Naive thymus-derived CD4-positive, alpha-beta T cell (primary cell): ENCODE measurements at regions of chr14 and their contacts with region 1.

Region 1: GRCh38 chr14:22491683-22492621 is 97.1 kb downstream of the DAD1 start:
- DNase-seq: peak in 1 of 9 donors; percentile 68
- ATAC-seq: peak; percentile 79
- H3K4me3 ChIP-seq: peak overlapping the region; percentile 67
- H3K4me3 Mint-ChIP-seq: peak overlapping the region; percentile 79 to 96 (median 89)
- H3K27ac ChIP-seq: peak overlapping the region; percentile 90
- H3K27ac Mint-ChIP-seq: peak overlapping the region; percentile 68 to 97 (median 95)
- H3K4me1 ChIP-seq: no peaks in the 10 kb centered on the region
- H3K4me1 Mint-ChIP-seq: peaks cover 5 to 52% (median 12%) of the 10 kb centered on the region in 7 donors
- H3K27me3 ChIP-seq: no peaks in the 10 kb centered on the region
- H3K27me3 Mint-ChIP-seq: no peaks in the 10 kb centered on the region

Region 2: GRCh38 chr14:21868442-21869046 is 623.4 kb before region 1 on chr14:
- CTCF ChIA-PET with region 1: no interaction called
- POLR2A ChIA-PET with region 1: interaction called, 3 read pairs
- intact Hi-C with region 1: loop called in 1 of 2 experiments (anchors 5 kb)
- DNase-seq: peak; percentile 33 to 79 (median 70)
- ATAC-seq: peak; percentile 97
- H3K4me3 ChIP-seq: peak overlapping the region; percentile 16
- H3K4me3 Mint-ChIP-seq: peak overlapping the region; percentile 18 to 85 (median 74)
- H3K27ac ChIP-seq: peak overlapping the region; percentile 25
- H3K27ac Mint-ChIP-seq: peak overlapping the region; percentile 8 to 88 (median 59)
- H3K4me1 ChIP-seq: peaks cover 4 to 8% of the 10 kb centered on the region in 2 donors
- H3K4me1 Mint-ChIP-seq: peaks cover 3 to 54% (median 25%) of the 10 kb centered on the region in 7 donors
- H3K27me3 ChIP-seq: peaks cover 0 to 3% of the 10 kb centered on the region in 2 donors
- H3K27me3 Mint-ChIP-seq: peaks cover 0 to 6% (median 0%) of the 10 kb centered on the region in 5 donors

Region 3: DNA sequence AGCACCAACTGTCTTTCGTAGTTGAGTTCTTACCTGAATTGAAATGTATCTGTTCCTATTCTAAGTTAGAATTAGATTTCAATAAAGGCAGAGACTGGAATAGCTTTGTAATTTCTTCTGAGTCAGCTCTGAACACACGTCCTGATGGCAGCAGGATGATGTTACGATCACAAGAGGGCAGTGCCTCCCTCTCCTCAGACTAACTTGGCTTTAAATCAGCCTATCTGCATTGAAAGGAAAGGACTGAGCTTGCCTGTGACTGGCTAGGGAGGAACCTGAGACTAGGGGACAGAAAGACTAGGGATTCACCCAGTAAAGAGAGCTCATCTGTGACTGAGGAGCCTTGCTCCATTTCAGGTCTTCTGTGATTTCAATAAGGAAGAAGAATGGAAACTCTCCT is 494.7 kb before region 1 on chr14:
- CTCF ChIA-PET with region 1: no interaction called
- POLR2A ChIA-PET with region 1: no interaction called
- intact Hi-C with region 1: loop called (anchors 2 to 5 kb)
- DNase-seq: peak in 6 of 9 donors; percentile 39 to 65 (median 58)
- ATAC-seq: peak; percentile 91
- H3K4me3 ChIP-seq: peak overlapping the region; percentile 51
- H3K4me3 Mint-ChIP-seq: peak overlapping the region; percentile 85 to 96 (median 90)
- H3K27ac ChIP-seq: peak overlapping the region; percentile 54
- H3K27ac Mint-ChIP-seq: peak overlapping the region; percentile 72 to 95 (median 89)
- H3K4me1 ChIP-seq: peaks cover under 1 to 2% of the 10 kb centered on the region in 2 donors
- H3K4me1 Mint-ChIP-seq: peaks cover 1 to 35% (median 19%) of the 10 kb centered on the region in 7 donors
- H3K27me3 ChIP-seq: no peaks in the 10 kb centered on the region
- H3K27me3 Mint-ChIP-seq: peaks cover 0 to 5% (median 0%) of the 10 kb centered on the region in 5 donors

Region 4: GRCh38 chr14:22010545-22011252 is 481.3 kb before region 1 on chr14:
- CTCF ChIA-PET with region 1: no interaction called
- POLR2A ChIA-PET with region 1: no interaction called
- intact Hi-C with region 1: no loop called
- DNase-seq: no peak
- ATAC-seq: no peak
- H3K4me3 ChIP-seq: no peak overlapping the region
- H3K4me3 Mint-ChIP-seq: no peak overlapping the region
- H3K27ac ChIP-seq: no peak overlapping the region
- H3K27ac Mint-ChIP-seq: peak overlapping the region in 4 of 9 donors; percentile 34 to 82 (median 42)
- H3K4me1 ChIP-seq: peaks cover 0 to 9% of the 10 kb centered on the region in 2 donors
- H3K4me1 Mint-ChIP-seq: peaks cover 2 to 21% (median 16%) of the 10 kb centered on the region in 7 donors
- H3K27me3 ChIP-seq: no peaks in the 10 kb centered on the region
- H3K27me3 Mint-ChIP-seq: no peaks in the 10 kb centered on the region

Region 5: GRCh38 chr14:22221508-22221907 is 270.4 kb before region 1 on chr14:
- CTCF ChIA-PET with region 1: no interaction called
- POLR2A ChIA-PET with region 1: interaction called, 4 read pairs
- intact Hi-C with region 1: loop called in 1 of 2 experiments (anchors 5 kb)
- DNase-seq: peak in 5 of 9 donors; percentile 5 to 29 (median 20)
- ATAC-seq: no peak
- H3K4me3 ChIP-seq: no peak overlapping the region
- H3K4me3 Mint-ChIP-seq: peak overlapping the region; percentile 25 to 73 (median 52)
- H3K27ac ChIP-seq: no peak overlapping the region
- H3K27ac Mint-ChIP-seq: peak overlapping the region in 6 of 9 donors; percentile 4 to 72 (median 52)
- H3K4me1 ChIP-seq: no peaks in the 10 kb centered on the region
- H3K4me1 Mint-ChIP-seq: peaks cover 0 to 13% (median 7%) of the 10 kb centered on the region in 7 donors
- H3K27me3 ChIP-seq: no peaks in the 10 kb centered on the region
- H3K27me3 Mint-ChIP-seq: no peaks in the 10 kb centered on the region

Region 6: DNA sequence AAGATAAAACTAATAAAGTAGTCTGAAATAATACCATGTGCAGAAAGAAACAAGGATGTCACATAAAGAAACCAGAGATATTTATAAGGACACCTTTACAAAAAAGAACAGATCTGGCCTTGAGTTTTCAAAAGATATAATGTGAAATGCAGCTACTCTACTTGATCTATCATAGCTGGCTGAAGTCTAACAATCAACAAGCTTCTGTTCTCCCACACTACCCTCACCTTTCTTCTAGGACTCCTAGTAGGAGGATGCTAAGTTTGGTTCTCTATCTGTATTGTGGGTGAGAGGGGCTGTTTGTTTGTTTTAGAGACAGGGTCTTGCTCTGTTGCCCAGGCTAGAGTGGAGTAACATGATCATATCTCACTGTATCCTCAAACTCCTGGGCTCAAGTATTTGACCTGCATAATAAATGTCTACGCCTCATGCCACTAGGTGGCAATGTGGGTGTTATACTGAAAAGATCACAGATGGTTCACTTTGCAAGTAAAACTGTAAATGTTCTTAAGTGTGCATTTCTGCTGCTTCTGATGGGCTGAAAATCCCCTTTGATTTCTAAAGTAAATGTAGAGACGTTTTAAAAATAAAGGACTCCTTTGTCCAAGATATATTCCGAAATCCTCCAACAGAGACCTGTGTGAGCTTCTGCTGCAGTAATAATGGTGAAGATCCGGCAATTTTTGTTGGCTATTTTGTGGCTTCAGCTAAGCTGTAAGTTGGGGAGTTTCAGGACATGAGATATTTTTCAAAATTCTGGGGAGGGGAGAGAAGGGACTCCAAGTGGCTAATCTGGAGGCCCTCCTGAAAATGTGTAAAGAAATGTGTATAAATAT is 172.2 kb before region 1 on chr14:
- CTCF ChIA-PET with region 1: no interaction called
- POLR2A ChIA-PET with region 1: interaction called, 3 read pairs
- intact Hi-C with region 1: loop called (anchors 5 to 10 kb)
- DNase-seq: peak in 3 of 9 donors; percentile 12 to 29 (median 15)
- ATAC-seq: peak; percentile 51
- H3K4me3 ChIP-seq: no peak overlapping the region
- H3K4me3 Mint-ChIP-seq: peak overlapping the region; percentile 60 to 84 (median 74)
- H3K27ac ChIP-seq: no peak overlapping the region
- H3K27ac Mint-ChIP-seq: peak overlapping the region in 5 of 9 donors; percentile 57 to 82 (median 69)
- H3K4me1 ChIP-seq: no peaks in the 10 kb centered on the region
- H3K4me1 Mint-ChIP-seq: no peaks in the 10 kb centered on the region
- H3K27me3 ChIP-seq: no peaks in the 10 kb centered on the region
- H3K27me3 Mint-ChIP-seq: no peaks in the 10 kb centered on the region

Region 7: GRCh38 chr14:22519877-22520685 is 28.1 kb after region 1 on chr14:
- CTCF ChIA-PET with region 1: no interaction called
- POLR2A ChIA-PET with region 1: interaction called, 558 read pairs
- intact Hi-C with region 1: no loop called
- DNase-seq: peak in 1 of 9 donors; percentile 31
- ATAC-seq: peak; percentile 33
- H3K4me3 ChIP-seq: peak overlapping the region; percentile 56
- H3K4me3 Mint-ChIP-seq: peak overlapping the region; percentile 79 to 92 (median 89)
- H3K27ac ChIP-seq: peak overlapping the region; percentile 90
- H3K27ac Mint-ChIP-seq: peak overlapping the region; percentile 93 to 99 (median 96)
- H3K4me1 ChIP-seq: peaks cover 90 to 91% of the 10 kb centered on the region in 2 donors
- H3K4me1 Mint-ChIP-seq: peaks cover 28 to 99% (median 94%) of the 10 kb centered on the region in 7 donors
- H3K27me3 ChIP-seq: no peaks in the 10 kb centered on the region
- H3K27me3 Mint-ChIP-seq: no peaks in the 10 kb centered on the region